ENCODE measurements at regions of chr6 and their contacts with region 1.

Region 1: DNA sequence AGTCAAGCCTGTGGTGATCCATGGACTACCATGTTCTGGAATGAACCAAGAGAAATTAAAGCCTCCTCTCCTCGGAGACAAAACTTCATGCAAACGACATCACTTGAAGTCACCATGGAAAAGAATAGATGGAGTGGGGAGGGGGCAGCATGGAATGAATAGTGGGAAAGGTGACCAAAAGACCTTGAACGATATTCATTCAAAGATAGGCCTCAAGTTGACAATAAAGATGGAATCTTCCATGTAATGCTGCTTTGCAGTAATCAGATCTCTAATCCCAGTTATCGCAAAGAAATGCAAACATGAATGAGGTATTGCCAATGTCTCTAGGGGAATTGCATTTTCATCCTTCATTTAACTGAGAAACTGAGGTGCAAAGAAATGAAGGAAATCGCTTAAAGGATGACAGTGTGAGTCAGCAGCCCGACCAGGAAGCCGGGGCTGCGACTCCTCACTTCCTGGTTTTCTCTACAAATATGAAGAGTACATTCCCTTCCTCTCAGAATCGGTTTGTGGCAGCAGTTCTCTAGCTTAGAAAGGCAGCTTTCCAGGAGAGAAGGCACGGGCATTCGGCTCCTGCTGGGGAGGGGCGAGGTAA is 65.6 kb upstream of the RREB1 start:
- DNase-seq: peak in 2 of 5 donors; percentile 24 to 69
- ATAC-seq: peak in 3 of 4 donors; percentile 7 to 29 (median 28)
- H3K4me3 ChIP-seq: no peak overlapping the region
- H3K27ac ChIP-seq: peak overlapping the region in 10 of 12 donors; percentile 33 to 84 (median 63)
- H3K4me1 ChIP-seq: peaks cover 0 to 30% (median 7%) of the 10 kb centered on the region in 12 donors
- H3K27me3 ChIP-seq: no peaks in the 10 kb centered on the region
- CTCF ChIP-seq: no peak
- POLR2A ChIP-seq: no peak

Region 2: GRCh38 chr6:6927521-6928371 is 114.4 kb before region 1 on chr6:
- intact Hi-C with region 1: loop called in 1 of 10 experiments (anchors 10 kb)
- DNase-seq: peak; percentile 45 to 74 (median 48)
- ATAC-seq: peak; percentile 88 to 92 (median 90)
- H3K4me3 ChIP-seq: peak overlapping the region in 10 of 12 donors; percentile 18 to 53 (median 44)
- H3K27ac ChIP-seq: peak overlapping the region in 11 of 12 donors; percentile 61 to 86 (median 75)
- H3K4me1 ChIP-seq: peaks cover 0 to 28% (median 4%) of the 10 kb centered on the region in 12 donors
- H3K27me3 ChIP-seq: no peaks in the 10 kb centered on the region
- CTCF ChIP-seq: peak in 10 of 12 donors; percentile 6 to 43 (median 23)
- POLR2A ChIP-seq: no peak

Region 3: DNA sequence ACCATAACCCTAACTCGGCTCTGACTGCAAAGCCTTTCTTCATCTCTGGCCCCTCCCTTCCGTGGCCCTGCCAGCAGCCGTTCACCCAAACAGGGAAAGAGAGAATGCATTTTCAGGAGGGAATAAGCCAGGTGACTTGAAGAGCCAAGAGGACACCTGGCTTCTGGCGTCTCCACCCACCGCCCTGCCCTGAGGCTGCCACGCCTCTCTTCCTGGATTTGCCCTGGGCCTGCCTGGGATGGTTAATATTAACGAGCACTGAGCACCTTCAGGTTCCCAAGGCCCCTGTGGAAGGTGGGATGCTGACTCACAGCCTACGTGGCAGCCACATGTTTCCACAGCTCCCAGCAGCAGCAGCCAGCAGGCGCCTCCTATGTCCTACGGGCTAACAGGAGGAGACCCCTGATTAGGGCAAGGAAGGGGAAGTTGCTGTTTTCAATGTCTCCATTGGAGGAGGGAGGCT is 72.4 kb before region 1 on chr6:
- intact Hi-C with region 1: loop called in 1 of 10 experiments (anchors 10 kb)
- DNase-seq: no peak
- ATAC-seq: peak in 1 of 4 donors; percentile 12
- H3K4me3 ChIP-seq: no peak overlapping the region
- H3K27ac ChIP-seq: no peak overlapping the region
- H3K4me1 ChIP-seq: peaks cover 0 to 5% (median 0%) of the 10 kb centered on the region in 12 donors
- H3K27me3 ChIP-seq: no peaks in the 10 kb centered on the region
- CTCF ChIP-seq: no peak
- POLR2A ChIP-seq: no peak

Region 4: GRCh38 chr6:6998194-6998569 is 44.0 kb before region 1 on chr6:
- intact Hi-C with region 1: loop called in 2 of 10 experiments (anchors 5 to 10 kb)
- DNase-seq: no peak
- ATAC-seq: no peak
- H3K4me3 ChIP-seq: no peak overlapping the region
- H3K27ac ChIP-seq: no peak overlapping the region
- H3K4me1 ChIP-seq: peaks cover 0 to 28% (median 6%) of the 10 kb centered on the region in 12 donors
- H3K27me3 ChIP-seq: no peaks in the 10 kb centered on the region
- CTCF ChIP-seq: no peak
- POLR2A ChIP-seq: no peak